Activated T-helper 2 cell treated with anti-CD3 and anti-CD28 coated beads, Interferon-gamma antibody, Interleukin-2, Interleukin-4, amounts not matched to agents 10 μg/mL and 5 μg/mL and 100 μg/mL, durations not matched to agents 14 hours and 24 hours and 36 hours (primary cell): ENCODE measurements at regions of chr2 and their contacts with region 1.

Region 1: GRCh38 chr2:8709611-8710010 is 27.8 kb downstream of the ID2 start:
- DNase-seq: no peak
- H3K4me3 Mint-ChIP-seq: no peak overlapping the region
- H3K27ac Mint-ChIP-seq: no peak overlapping the region
- H3K4me1 Mint-ChIP-seq: no peaks in the 10 kb centered on the region
- H3K27me3 Mint-ChIP-seq: no peaks in the 10 kb centered on the region

Region 2: GRCh38 chr2:8606226-8606625 is 103.4 kb before region 1 on chr2:
- intact Hi-C with region 1: no loop called
- DNase-seq: no peak
- H3K4me3 Mint-ChIP-seq: no peak overlapping the region
- H3K27ac Mint-ChIP-seq: peak overlapping the region; percentile 53
- H3K4me1 Mint-ChIP-seq: peaks cover 55% of the 10 kb centered on the region
- H3K27me3 Mint-ChIP-seq: peaks cover 7% of the 10 kb centered on the region

Region 3: DNA sequence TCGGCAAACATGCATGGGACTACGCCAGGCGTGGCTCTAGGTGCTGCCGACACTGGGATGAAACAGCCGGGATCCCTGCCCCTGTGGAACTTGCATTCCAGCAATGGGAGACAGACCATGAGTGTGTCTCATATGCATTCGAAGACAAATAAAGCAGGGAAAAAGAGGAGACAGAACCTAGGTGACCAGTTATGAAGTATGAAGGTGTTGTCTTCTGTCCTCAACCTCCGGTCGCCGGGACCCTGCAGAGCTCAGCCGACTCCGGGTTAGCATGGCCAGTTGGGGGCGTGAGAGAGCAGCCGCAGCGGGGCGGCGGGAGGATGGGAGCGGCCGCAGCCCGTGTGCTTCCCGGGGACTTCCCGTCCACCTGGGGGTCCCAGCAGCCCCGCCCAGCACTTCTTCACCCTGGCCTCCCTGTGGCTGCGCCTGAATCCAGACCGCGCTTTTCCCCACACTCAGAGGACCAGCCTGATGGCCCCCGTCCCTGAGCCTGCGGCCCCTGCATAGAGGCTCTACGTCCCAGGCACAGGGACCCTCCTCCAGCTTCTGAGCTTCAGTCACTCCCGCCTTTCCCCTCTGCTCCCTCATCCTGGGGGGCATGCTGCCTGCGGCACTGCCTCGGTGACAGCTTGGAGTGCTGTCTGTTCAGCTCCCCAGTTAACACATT is 16.3 kb before region 1 on chr2:
- intact Hi-C with region 1: loop called (anchors 1 kb)
- DNase-seq: no peak
- H3K4me3 Mint-ChIP-seq: no peak overlapping the region
- H3K27ac Mint-ChIP-seq: no peak overlapping the region
- H3K4me1 Mint-ChIP-seq: peaks cover 3% of the 10 kb centered on the region
- H3K27me3 Mint-ChIP-seq: peaks cover 26% of the 10 kb centered on the region